Breast epithelium (tissue), 4 donors: ENCODE measurements at regions of chr19 and their contacts with region 1.

Region 1: DNA sequence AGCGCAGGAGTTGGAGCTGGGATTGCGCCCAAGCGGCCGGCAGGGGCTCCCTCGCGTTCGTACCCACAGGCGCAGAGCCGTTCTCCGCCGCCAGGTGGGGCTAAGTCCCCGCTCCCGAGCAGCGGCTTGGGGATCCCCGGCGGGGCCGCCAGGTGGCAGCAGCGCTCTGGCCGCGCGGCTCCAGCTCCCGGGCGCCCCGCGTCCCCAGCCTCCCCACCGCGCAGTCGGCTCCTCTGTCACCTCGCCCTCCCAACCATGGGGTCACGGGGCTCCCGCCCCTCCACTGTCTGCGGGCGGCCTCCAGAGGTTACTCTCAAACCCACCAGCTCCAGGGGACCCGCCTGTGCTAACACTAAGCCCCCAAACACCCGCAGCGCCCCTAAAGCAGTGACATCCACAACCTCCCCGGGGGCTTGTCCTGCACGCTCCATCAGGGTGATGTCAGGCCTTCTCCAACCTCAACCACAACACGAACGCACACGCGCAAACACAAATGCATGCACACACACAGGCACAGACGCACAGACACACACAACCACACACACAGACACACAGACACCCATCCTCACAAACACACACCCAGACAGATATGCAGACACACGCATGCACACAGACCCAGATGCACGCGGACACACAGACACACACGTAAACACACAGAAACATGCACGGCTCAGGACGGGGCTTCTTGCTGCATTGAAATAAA is 18.4 kb upstream of the KCTD15 start:
- DNase-seq: peak; percentile 50 to 84
- H3K4me3 ChIP-seq: peak overlapping the region in 2 of 3 donors; percentile 30 to 63
- H3K27ac ChIP-seq: no peak overlapping the region
- H3K4me1 ChIP-seq: no peaks in the 10 kb centered on the region
- H3K27me3 ChIP-seq: peaks cover 0 to 39% of the 10 kb centered on the region in 2 donors
- CTCF ChIP-seq: peak; percentile 99 to 100 (median 100)
- POLR2A ChIP-seq: no peak

Region 2: GRCh38 chr19:33719366-33720154 is 58.7 kb before region 1 on chr19:
- intact Hi-C with region 1: no loop called
- DNase-seq: no peak
- H3K4me3 ChIP-seq: no peak overlapping the region
- H3K27ac ChIP-seq: no peak overlapping the region
- H3K4me1 ChIP-seq: no peaks in the 10 kb centered on the region
- H3K27me3 ChIP-seq: peaks cover 0 to 33% of the 10 kb centered on the region in 2 donors
- CTCF ChIP-seq: no peak
- POLR2A ChIP-seq: no peak

Region 3: DNA sequence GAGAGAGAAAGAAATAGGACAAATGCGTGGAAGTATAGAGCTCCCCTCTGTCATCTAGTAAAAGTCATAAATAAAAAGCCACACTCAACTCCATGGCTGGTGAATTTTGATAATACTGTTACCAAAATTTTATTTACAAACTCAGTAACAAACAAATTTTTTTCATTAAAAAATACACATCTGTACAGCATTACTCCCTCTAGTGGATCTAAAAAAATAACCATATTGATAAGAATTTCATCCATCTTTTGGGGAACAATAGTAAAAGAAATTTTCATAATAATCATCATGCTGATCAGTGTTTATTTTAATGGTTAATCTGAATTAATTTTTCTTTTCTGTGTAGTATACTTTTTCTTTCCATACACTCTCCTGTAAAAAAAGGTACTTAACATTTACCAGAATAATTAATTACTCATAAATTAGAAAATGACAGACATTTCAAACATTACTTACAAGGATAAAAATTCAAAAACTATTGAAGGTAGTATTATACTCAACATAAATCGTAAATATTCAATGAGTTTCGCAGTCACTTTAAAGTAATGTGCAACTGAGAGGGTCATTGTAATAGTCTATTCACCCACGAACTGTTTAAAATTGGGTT is 220.6 kb after region 1 on chr19:
- intact Hi-C with region 1: loop called (anchors 10 kb)
- DNase-seq: no peak
- H3K4me3 ChIP-seq: no peak overlapping the region
- H3K27ac ChIP-seq: no peak overlapping the region
- H3K4me1 ChIP-seq: no peaks in the 10 kb centered on the region
- H3K27me3 ChIP-seq: peaks cover 0 to 4% of the 10 kb centered on the region in 2 donors
- CTCF ChIP-seq: peak in 2 of 3 donors; percentile 43 to 53
- POLR2A ChIP-seq: no peak

Region 4: GRCh38 chr19:34104096-34104495 is 325.9 kb after region 1 on chr19:
- intact Hi-C with region 1: loop called (anchors 5 kb)
- DNase-seq: no peak
- H3K4me3 ChIP-seq: no peak overlapping the region
- H3K27ac ChIP-seq: no peak overlapping the region
- H3K4me1 ChIP-seq: no peaks in the 10 kb centered on the region
- H3K27me3 ChIP-seq: no peaks in the 10 kb centered on the region
- CTCF ChIP-seq: no peak
- POLR2A ChIP-seq: no peak